IMR-90 (cell line): ENCODE measurements at regions of chr2 and their contacts with region 1.

Region 1: GRCh38 chr2:28219138-28219537 is 173.5 kb upstream of the FOSL2 start:
- DNase-seq: peak; percentile 43
- ATAC-seq: peak; percentile 56
- H3K4me3 ChIP-seq: no peak overlapping the region
- H3K27ac ChIP-seq: no peak overlapping the region
- H3K4me1 ChIP-seq: peaks cover 5% of the 10 kb centered on the region; the same call in 1 of the 2 replicates
- H3K27me3 ChIP-seq: no peaks in the 10 kb centered on the region
- CTCF ChIP-seq: no peak
- POLR2A ChIP-seq: no peak
- RAD21 ChIP-seq: no peak

Region 2: DNA sequence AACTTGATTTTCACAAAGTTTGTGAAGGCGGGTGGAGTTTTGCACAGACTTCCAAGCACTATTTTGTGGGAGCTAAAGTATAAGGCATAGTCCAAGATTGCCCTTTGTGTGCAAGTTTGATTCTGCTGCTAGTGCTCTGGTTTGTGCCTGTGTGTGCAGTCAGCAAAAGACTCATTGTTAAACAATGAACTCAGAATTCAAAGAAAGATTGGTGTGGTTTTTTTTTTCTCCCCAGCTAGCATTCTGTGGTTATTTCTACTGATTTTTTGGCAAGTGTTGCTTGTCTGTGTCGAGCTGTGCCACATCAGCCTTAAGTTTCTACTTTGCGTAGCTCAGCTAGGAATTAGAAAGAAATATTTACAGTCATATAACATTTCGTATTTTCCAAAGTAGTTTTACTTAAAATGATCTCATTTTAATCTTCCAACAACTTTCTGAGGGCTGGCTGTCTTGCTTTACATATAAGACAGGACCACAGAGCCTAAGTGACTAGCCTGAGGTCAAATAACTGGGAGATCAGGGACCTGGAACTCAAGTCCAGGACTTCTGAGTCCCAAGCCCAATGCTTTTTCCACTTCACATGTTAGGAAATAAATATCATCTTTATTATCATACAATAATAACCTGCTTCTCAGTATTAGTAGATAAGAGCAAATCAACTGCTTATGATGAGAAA is 258.8 kb before region 1 on chr2:
- CTCF ChIA-PET with region 1: no interaction called
- POLR2A ChIA-PET with region 1: interaction called, 13 read pairs
- dilution Hi-C with region 1: no loop called
- in situ Hi-C with region 1: no loop called
- intact Hi-C with region 1: no loop called
- DNase-seq: peak; percentile 93
- ATAC-seq: peak; percentile 71
- H3K4me3 ChIP-seq: no peak overlapping the region
- H3K27ac ChIP-seq: peak overlapping the region; percentile 75
- H3K4me1 ChIP-seq: peaks cover 16% of the 10 kb centered on the region
- H3K27me3 ChIP-seq: no peaks in the 10 kb centered on the region
- CTCF ChIP-seq: no peak
- POLR2A ChIP-seq: no peak
- RAD21 ChIP-seq: no peak

Region 3: GRCh38 chr2:28155627-28156026 is 63.5 kb before region 1 on chr2:
- CTCF ChIA-PET with region 1: no interaction called
- POLR2A ChIA-PET with region 1: no interaction called
- dilution Hi-C with region 1: no loop called
- in situ Hi-C with region 1: no loop called
- intact Hi-C with region 1: no loop called
- DNase-seq: no peak
- ATAC-seq: no peak
- H3K4me3 ChIP-seq: no peak overlapping the region
- H3K27ac ChIP-seq: no peak overlapping the region
- H3K4me1 ChIP-seq: peaks cover 3% of the 10 kb centered on the region; the same call in 1 of the 2 replicates
- H3K27me3 ChIP-seq: no peaks in the 10 kb centered on the region
- CTCF ChIP-seq: 0 out of 2 replicates have a peak, but pooled peaks have one; percentile 30
- POLR2A ChIP-seq: no peak
- RAD21 ChIP-seq: peak; percentile 36; the same call in 1 of the 2 replicates

Region 4: DNA sequence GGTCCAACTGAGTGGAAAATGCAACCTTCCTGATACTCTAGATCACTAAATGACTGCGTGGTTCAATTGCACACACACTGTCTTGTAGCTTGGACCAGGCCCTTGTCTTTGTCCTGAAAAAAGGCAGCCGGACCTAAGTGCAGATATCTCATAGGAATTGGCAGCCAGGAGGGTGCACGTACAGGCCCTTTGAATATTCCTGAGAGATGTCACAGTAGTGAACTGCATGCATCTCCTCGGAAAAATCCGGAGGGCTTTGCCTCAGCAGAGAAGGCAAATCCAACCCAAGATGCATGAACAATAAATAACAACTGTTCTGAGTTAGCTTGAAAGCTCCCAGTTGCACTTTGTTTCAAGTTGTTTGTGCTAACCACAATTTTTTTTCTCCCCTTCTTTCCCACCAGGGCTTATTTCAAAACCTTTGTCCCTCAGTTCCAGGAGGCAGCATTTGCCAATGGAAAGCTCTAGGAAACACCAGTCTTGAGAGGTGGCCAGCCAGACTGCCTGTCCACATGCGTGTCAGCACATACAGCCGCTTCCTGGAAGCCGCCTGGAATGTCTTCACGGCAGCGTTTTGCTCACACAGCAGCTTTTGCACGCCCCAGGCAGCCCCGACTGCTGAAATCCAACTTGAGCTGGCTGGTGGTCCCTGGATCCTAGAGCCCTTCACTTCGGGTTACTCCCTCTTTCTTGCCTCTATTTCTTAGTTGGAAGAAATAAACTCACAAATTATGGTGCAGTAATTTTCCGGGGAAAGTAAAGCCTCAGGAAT is 119.1 kb after region 1 on chr2:
- CTCF ChIA-PET with region 1: no interaction called
- POLR2A ChIA-PET with region 1: no interaction called
- dilution Hi-C with region 1: no loop called
- in situ Hi-C with region 1: no loop called
- intact Hi-C with region 1: no loop called
- DNase-seq: peak; percentile 85
- ATAC-seq: peak; percentile 79
- H3K4me3 ChIP-seq: no peak overlapping the region
- H3K27ac ChIP-seq: peak overlapping the region; percentile 70; the same call in 1 of the 2 replicates
- H3K4me1 ChIP-seq: peaks cover 24% of the 10 kb centered on the region
- H3K27me3 ChIP-seq: no peaks in the 10 kb centered on the region
- CTCF ChIP-seq: no peak
- POLR2A ChIP-seq: no peak
- RAD21 ChIP-seq: peak; percentile 14; the same call in 1 of the 2 replicates

Region 5: DNA sequence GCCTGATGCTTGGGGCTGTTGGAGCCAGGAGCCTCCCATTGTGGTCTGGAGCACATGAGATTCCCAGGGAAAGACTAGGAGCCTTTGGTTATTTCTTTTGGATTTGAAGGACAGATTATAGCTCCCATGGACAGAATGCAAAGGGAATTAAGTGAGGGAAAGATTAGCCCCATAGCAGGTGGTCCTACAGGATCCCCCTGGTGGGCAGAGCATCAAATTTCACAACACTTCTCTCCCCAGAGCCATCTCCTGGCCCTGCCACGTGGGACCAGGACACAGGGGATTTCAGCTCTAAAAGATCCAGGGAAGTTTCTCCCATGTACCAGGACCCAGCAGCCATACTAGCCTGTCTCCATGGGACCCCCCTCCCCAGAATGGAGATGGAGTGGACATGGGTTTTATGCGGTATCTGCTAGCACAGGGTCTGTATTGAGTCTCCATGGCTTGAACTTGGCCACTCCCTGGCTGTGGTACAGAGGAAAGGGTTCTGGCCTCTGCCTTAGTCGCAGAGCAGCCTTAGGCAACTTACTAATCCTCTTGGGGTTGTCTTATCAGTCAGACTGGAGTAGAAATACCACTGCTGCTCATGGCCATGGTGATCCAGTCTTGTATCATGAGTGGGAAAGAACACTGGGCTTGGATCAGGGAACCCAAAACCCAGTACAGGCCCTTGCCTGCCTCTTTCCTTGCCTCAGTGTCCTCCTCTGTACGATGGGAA is 269.9 kb after region 1 on chr2:
- CTCF ChIA-PET with region 1: no interaction called
- POLR2A ChIA-PET with region 1: no interaction called
- dilution Hi-C with region 1: no loop called
- in situ Hi-C with region 1: no loop called
- intact Hi-C with region 1: no loop called
- DNase-seq: no peak
- ATAC-seq: no peak
- H3K4me3 ChIP-seq: no peak overlapping the region
- H3K27ac ChIP-seq: no peak overlapping the region
- H3K4me1 ChIP-seq: no peaks in the 10 kb centered on the region
- H3K27me3 ChIP-seq: peaks cover 51% of the 10 kb centered on the region
- CTCF ChIP-seq: no peak
- POLR2A ChIP-seq: no peak
- RAD21 ChIP-seq: no peak